T-cell (primary cell): ENCODE measurements at regions of chr14 and their contacts with region 1.

Region 1: GRCh38 chr14:56660732-56661389 is 81.3 kb downstream of the TMEM260 start:
- DNase-seq: no peak
- ATAC-seq: no peak
- H3K4me3 ChIP-seq: no peak overlapping the region
- H3K4me3 Mint-ChIP-seq: no peak overlapping the region
- H3K27ac ChIP-seq: no peak overlapping the region
- H3K27ac Mint-ChIP-seq: no peak overlapping the region
- H3K4me1 ChIP-seq: no peaks in the 10 kb centered on the region
- H3K4me1 Mint-ChIP-seq: no peaks in the 10 kb centered on the region
- H3K27me3 ChIP-seq: peaks cover 0 to 8% of the 10 kb centered on the region in 2 experiments
- H3K27me3 Mint-ChIP-seq: peaks cover 0 to 3% of the 10 kb centered on the region in 2 donors

Region 2: DNA sequence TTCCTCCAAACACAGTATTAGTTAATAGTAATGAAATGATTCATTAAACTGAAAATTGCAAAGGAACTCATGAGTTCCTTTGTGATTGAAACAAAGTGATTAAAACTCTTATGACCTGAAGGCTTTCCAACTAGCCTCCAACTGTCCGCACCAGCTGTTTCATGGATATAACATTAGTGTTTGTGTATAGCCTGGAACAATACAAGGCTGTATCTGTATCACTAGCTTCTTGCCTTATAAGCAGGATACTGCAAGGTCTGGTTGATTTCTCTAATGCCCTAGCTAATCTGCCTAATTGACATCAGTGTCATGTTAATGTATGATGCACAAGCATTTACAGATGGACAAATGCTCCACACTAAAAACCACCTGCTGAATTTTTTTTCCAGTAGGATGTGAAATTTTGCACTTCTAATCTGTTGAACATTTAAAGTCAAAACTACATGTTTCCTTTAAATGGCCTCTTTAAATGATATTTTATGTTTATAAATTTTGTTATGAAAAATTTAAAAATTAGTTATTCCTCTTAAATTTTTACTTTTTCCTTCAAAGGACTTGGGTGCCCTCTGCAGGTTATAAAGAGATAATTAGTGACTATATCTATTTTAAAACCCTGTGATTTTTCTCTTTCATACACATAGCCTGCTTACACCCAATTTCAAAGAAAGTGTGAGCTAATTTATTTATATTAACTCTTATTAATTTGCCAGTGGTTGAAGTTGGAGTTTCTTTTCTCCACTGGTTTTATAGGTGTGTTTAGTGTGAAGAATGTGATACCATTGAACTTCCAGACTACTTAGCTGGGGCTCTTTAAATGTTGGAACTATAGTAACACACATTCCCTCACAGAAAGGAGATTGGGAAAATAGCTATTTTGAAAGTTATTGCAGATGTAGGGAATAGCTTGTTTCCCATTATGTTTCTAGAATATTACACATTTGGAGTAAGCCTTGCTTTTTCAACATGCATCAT is 633.3 kb after region 1 on chr14:
- CTCF ChIA-PET with region 1: no interaction called
- POLR2A ChIA-PET with region 1: interaction called in 1 of 2 experiments, 13 read pairs
- DNase-seq: peak in 1 of 35 experiments; percentile 33
- ATAC-seq: no peak
- H3K4me3 ChIP-seq: no peak overlapping the region
- H3K4me3 Mint-ChIP-seq: no peak overlapping the region
- H3K27ac ChIP-seq: no peak overlapping the region
- H3K27ac Mint-ChIP-seq: no peak overlapping the region
- H3K4me1 ChIP-seq: no peaks in the 10 kb centered on the region
- H3K4me1 Mint-ChIP-seq: no peaks in the 10 kb centered on the region
- H3K27me3 ChIP-seq: no peaks in the 10 kb centered on the region
- H3K27me3 Mint-ChIP-seq: no peaks in the 10 kb centered on the region